ENCODE measurements at regions of chr6 and their contacts with region 1.

Region 1: DNA sequence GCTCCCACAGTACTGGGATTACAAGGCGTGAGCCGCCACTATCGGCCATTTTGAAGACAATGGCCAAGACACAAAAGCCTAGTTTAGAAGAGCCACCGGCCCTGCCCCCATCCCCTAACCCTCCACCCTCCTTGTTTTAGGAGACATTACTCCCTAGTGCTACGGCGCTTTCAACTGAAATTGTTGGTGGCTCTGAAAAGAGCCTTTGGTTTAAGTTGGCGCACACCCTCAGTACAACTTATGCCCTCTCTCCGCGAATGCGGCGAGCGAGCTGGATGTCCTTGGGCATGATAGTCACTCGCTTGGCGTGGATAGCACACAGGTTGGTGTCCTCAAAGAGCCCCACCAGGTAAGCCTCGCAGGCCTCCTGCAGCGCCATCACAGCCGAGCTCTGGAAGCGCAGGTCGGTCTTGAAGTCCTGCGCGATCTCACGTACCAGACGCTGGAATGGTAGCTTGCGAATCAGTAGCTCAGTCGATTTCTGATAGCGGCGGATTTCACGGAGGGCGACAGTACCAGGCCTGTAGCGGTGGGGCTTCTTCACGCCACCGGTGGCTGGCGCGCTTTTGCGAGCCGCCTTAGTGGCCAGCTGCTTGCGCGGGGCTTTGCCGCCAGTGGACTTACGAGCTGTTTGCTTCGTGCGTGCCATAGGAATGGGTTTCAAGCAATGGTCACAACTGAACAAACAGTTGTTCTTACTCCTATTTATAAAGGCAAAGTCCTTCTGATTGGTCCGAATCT is 114.9 kb upstream of the BTN3A2 start:
- DNase-seq: peak; percentile 57
- ATAC-seq: peak; percentile 63
- H3K4me3 Mint-ChIP-seq: peak overlapping the region; percentile 94
- H3K27ac Mint-ChIP-seq: peak overlapping the region; percentile 90
- H3K4me1 Mint-ChIP-seq: peaks cover 36% of the 10 kb centered on the region
- H3K27me3 Mint-ChIP-seq: no peaks in the 10 kb centered on the region
- CTCF ChIP-seq: no peak

Region 2: DNA sequence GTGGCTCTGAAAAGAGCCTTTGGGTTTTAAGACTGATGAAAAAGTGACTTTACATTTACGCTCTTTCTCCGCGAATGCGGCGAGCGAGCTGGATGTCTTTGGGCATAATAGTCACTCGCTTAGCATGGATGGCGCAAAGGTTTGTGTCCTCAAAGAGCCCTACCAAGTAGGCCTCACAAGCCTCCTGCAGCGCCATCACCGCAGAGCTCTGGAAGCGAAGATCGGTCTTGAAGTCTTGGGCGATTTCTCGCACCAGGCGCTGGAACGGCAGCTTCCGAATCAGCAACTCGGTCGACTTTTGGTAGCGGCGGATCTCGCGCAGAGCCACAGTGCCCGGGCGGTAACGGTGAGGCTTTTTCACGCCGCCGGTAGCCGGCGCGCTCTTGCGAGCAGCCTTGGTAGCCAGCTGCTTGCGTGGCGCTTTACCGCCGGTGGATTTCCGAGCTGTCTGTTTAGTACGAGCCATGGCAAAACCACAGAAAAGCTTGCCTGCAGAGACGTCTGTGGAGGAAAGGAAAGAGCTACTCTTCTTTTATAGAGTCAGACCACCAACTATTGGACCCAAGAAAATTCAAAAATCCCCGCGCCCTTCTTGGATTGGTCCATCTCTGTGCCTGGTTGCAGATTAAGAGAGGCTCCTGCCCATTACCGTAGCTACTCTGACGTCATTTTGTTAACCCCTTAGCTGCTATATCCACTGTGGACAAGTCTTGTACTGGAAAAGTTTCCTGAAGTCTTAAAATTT is 218.4 kb before region 1 on chr6:
- CTCF ChIA-PET with region 1: no interaction called
- POLR2A ChIA-PET with region 1: interaction called, 10 read pairs
- intact Hi-C with region 1: no loop called
- DNase-seq: peak; percentile 55
- ATAC-seq: peak; percentile 62
- H3K4me3 Mint-ChIP-seq: peak overlapping the region; percentile 93
- H3K27ac Mint-ChIP-seq: peak overlapping the region; percentile 98
- H3K4me1 Mint-ChIP-seq: peaks cover 40% of the 10 kb centered on the region
- H3K27me3 Mint-ChIP-seq: peaks cover 2% of the 10 kb centered on the region
- CTCF ChIP-seq: no peak

Region 3: DNA sequence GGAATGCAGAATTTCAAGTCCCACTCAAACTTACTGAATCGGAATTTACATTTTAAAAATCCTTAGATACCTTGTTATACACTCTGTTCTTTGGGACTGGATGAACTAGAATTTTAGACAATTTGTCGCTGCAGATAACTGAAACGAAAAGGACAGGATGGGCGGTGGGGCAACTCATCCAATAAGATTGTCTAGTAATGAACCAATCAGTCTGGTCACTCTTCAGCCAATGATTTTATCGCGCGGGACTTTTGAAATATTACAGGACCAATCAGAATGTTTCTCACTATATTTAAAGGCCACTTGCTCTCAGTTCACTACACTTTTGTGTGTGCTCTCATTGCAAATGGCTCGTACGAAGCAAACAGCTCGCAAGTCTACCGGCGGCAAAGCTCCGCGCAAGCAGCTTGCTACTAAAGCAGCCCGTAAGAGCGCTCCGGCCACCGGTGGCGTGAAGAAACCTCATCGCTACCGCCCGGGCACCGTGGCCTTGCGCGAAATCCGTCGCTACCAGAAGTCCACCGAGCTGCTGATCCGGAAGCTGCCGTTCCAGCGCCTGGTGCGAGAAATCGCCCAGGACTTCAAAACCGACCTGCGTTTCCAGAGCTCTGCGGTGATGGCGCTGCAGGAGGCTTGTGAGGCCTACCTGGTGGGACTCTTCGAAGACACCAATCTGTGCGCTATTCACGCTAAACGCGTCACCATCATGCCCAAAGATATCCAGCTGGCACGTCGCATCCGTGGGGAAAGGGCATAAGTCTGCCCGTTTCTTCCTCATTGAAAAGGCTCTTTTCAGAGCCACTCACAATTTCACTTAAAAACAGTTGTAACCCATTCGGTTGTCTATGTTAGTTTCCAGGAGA is 204.8 kb before region 1 on chr6:
- CTCF ChIA-PET with region 1: no interaction called
- POLR2A ChIA-PET with region 1: interaction called, 12 read pairs
- intact Hi-C with region 1: no loop called
- DNase-seq: peak; percentile 51
- ATAC-seq: peak; percentile 58
- H3K4me3 Mint-ChIP-seq: peak overlapping the region; percentile 91
- H3K27ac Mint-ChIP-seq: peak overlapping the region; percentile 99
- H3K4me1 Mint-ChIP-seq: peaks cover 24% of the 10 kb centered on the region
- H3K27me3 Mint-ChIP-seq: no peaks in the 10 kb centered on the region
- CTCF ChIP-seq: no peak

Region 4: DNA sequence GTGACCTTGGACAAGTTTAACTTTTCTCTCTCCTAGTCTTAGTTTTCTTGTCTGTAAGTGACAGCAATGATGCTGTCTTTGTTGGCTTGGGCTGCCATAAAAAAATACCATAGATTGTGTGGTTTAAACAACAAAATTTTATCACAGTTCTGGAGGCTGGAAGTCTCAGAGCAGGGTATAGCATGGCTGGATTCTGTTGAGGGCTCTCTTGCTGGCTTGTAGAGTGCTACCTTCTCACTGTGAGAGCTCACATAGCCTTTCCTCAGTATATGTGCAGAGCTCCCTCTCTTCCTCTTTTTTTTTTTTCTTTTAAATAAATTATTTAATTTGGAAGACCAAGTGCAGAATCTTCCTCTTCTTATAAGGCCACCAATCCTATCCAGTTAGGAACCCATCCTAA is 136.6 kb before region 1 on chr6:
- CTCF ChIA-PET with region 1: no interaction called
- POLR2A ChIA-PET with region 1: no interaction called
- intact Hi-C with region 1: no loop called
- DNase-seq: no peak
- ATAC-seq: no peak
- H3K4me3 Mint-ChIP-seq: no peak overlapping the region
- H3K27ac Mint-ChIP-seq: no peak overlapping the region
- H3K4me1 Mint-ChIP-seq: no peaks in the 10 kb centered on the region
- H3K27me3 Mint-ChIP-seq: no peaks in the 10 kb centered on the region
- CTCF ChIP-seq: no peak

Region 5: DNA sequence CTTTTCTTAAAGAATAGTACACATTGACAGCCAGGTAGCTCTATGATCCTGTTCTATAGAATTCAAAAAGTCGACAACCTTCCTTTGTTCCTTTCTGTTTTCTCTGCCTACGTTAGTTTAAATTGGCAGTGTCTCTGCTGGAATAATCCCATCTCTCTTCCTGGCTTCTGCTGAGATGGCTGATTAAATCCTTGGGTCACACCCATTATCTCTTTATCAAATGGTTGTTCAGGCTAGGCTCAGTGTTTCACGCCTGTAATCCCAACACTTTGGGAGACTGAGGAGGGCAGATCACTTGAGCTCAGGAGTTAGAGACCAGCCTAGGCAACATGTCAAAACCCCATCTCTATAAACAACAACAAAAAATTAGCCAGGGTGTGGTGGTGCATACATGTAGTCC is 118.5 kb before region 1 on chr6:
- CTCF ChIA-PET with region 1: no interaction called
- POLR2A ChIA-PET with region 1: no interaction called
- intact Hi-C with region 1: no loop called
- DNase-seq: no peak
- ATAC-seq: no peak
- H3K4me3 Mint-ChIP-seq: no peak overlapping the region
- H3K27ac Mint-ChIP-seq: peak overlapping the region; percentile 27
- H3K4me1 Mint-ChIP-seq: peaks cover 83% of the 10 kb centered on the region
- H3K27me3 Mint-ChIP-seq: no peaks in the 10 kb centered on the region
- CTCF ChIP-seq: no peak

Region 6: GRCh38 chr6:26204332-26205165 is 45.6 kb before region 1 on chr6:
- CTCF ChIA-PET with region 1: interaction called, 3 read pairs
- POLR2A ChIA-PET with region 1: interaction called, 30 read pairs
- intact Hi-C with region 1: loop called (anchors 2 kb)
- DNase-seq: peak; percentile 70
- ATAC-seq: peak; percentile 59
- H3K4me3 Mint-ChIP-seq: no peak overlapping the region
- H3K27ac Mint-ChIP-seq: no peak overlapping the region
- H3K4me1 Mint-ChIP-seq: peaks cover 30% of the 10 kb centered on the region
- H3K27me3 Mint-ChIP-seq: peaks cover 2% of the 10 kb centered on the region
- CTCF ChIP-seq: no peak

Region 7: DNA sequence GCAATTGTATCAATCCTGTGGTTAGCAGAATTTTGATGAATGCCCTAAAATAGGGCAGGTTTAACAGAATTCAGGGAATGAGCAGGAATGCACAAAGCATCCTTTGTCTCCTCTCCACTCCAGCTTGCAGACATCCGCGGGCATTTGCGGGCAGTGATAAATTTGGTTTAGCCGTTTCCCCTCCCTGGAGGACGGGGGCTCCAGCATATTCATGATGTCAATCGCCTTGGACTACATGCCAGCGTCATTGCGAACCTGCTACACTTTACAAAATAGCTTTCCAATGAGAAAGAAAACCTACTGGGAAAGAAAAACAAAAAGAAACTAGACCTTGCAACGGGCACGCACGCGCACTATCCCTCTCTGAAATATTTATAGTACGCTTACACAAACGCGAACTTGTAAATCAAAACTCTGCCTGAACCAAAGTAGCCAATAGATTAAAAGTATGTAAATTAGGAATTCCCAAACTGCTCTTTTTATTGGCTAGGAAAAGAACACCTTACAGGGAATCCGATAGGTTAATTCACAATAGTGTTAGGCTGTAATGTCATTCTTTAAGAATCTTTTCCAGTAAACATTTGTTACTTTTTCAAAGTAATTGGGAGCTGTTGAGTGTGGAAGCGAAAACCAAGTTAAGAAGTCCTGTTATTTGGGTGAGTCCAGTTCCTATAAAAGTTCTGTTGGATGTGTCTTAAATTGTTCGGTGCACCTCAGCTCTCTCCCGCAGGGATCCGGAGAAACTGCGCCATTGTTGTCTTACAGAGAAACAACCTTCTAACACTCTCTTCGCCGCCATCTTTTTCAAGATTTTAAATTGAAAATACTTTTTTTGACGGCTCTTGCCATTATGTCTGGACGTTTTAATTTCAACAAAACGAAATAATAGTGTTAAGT is 26.2 kb before region 1 on chr6:
- CTCF ChIA-PET with region 1: no interaction called
- POLR2A ChIA-PET with region 1: interaction called, 32 read pairs
- intact Hi-C with region 1: no loop called
- DNase-seq: no peak
- ATAC-seq: peak; percentile 87
- H3K4me3 Mint-ChIP-seq: no peak overlapping the region
- H3K27ac Mint-ChIP-seq: no peak overlapping the region
- H3K4me1 Mint-ChIP-seq: peaks cover 4% of the 10 kb centered on the region
- H3K27me3 Mint-ChIP-seq: no peaks in the 10 kb centered on the region
- CTCF ChIP-seq: no peak

Region 8: DNA sequence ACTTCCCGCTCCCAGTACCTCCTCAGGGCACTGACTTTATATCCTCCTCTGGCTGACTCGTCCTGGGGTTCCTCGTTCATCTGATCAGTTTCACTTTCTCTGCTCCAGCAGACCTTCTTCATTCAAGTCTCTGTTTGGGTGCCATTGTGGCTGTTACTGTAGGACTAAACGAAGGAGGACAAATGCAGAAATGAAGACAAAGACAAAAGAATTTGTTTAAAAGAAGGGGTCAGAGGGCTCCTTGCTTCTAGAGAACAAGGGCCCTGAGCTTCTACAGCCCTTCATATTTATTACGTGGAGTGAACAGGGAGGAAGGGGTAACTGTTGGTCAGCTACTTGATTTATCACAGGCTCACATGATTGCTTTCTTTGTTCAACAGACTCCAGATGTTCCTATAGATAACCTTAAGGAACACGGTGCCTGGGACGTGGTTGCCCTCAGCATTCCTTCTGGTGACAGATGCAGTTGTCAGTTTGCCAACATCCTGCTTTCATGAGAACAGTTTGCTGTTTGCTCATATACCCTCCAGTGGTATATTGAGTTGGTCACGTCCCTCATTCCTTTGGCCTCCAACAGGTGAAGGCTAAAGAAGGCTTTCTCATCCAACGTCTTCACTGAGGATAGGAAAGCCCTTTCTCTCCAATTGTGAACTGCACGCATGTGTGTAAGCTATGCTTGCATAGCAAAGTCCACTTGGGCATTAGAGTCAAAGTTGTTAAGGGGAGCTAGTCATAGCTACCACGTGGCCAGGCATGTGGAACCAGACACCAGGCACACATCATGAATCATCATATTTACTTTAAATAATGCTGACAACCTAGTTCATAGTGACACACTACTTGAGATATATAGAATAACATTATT is 45.8 kb after region 1 on chr6:
- CTCF ChIA-PET with region 1: no interaction called
- POLR2A ChIA-PET with region 1: no interaction called
- intact Hi-C with region 1: no loop called
- DNase-seq: no peak
- ATAC-seq: no peak
- H3K4me3 Mint-ChIP-seq: peak overlapping the region; percentile 16
- H3K27ac Mint-ChIP-seq: no peak overlapping the region
- H3K4me1 Mint-ChIP-seq: peaks cover 7% of the 10 kb centered on the region
- H3K27me3 Mint-ChIP-seq: peaks cover 3% of the 10 kb centered on the region
- CTCF ChIP-seq: no peak

Region 9: GRCh38 chr6:26312501-26313390 is 62.6 kb after region 1 on chr6:
- CTCF ChIA-PET with region 1: no interaction called
- POLR2A ChIA-PET with region 1: interaction called, 4 read pairs
- intact Hi-C with region 1: loop called (anchors 2 kb)
- DNase-seq: peak; percentile 63
- ATAC-seq: peak; percentile 79
- H3K4me3 Mint-ChIP-seq: peak overlapping the region; percentile 90
- H3K27ac Mint-ChIP-seq: peak overlapping the region; percentile 95
- H3K4me1 Mint-ChIP-seq: peaks cover 28% of the 10 kb centered on the region
- H3K27me3 Mint-ChIP-seq: peaks cover 5% of the 10 kb centered on the region
- CTCF ChIP-seq: no peak

Region 10: DNA sequence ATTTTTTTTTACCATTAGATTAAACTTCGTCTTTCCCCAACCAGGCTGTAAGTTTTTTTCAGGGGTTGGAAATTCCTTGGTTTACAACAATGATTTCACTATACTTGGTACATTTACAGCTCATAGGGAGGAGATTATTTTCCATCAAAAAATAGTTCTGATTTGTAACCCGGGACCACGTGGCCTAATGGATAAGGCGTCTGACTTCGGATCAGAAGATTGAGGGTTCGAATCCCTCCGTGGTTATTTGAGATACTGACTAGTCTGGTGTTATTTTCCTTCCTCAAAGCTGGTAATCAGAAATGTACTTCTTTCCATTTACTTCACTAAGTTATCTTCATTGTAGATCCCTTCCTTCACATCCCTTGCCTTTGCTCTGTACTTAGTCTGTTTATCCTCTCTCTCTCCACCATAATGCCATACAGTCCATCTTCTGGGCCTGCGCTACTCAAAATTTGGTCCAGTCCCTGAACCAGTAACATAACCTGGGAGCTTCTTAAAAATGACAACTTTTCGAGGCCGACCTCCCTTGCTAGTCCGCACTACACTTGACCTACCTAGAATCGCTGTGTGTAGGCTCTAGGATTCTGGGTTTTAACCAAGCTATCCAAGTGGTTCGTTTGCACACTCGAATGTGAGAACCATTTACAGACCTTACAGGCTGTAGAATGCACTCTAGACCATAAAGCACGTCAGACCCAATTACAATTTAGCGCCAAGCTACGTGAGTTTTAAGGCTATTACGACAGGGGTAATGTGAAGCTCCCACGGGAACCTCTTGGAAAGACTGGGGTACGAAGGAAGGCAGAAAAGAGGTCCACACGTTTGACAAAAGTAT is 72.7 kb after region 1 on chr6:
- CTCF ChIA-PET with region 1: no interaction called
- POLR2A ChIA-PET with region 1: interaction called, 4 read pairs
- intact Hi-C with region 1: loop called (anchors 2 kb)
- DNase-seq: no peak
- ATAC-seq: peak; percentile 56
- H3K4me3 Mint-ChIP-seq: peak overlapping the region; percentile 89
- H3K27ac Mint-ChIP-seq: peak overlapping the region; percentile 85
- H3K4me1 Mint-ChIP-seq: peaks cover 25% of the 10 kb centered on the region
- H3K27me3 Mint-ChIP-seq: peaks cover 14% of the 10 kb centered on the region
- CTCF ChIP-seq: no peak